Dorsolateral prefrontal cortex (tissue), 120 donors: ENCODE measurements at regions of chr7 and their contacts with region 1.

Region 1: GRCh38 chr7:33062782-33063443 is 337 bp upstream of the NT5C3A start:
- DNase-seq: peak; percentile 84 to 93 (median 92)
- H3K4me3 ChIP-seq: peak overlapping the region; percentile 65 to 98 (median 91)
- H3K27ac ChIP-seq: peak overlapping the region; percentile 86 to 99 (median 96)
- H3K27me3 ChIP-seq: no peaks in the 10 kb centered on the region
- CTCF ChIP-seq: peak in 21 of 56 donors; percentile 1 to 49 (median 15)

Region 2: GRCh38 chr7:32495298-32496176 is 567.4 kb before region 1 on chr7 and contains the start of gene AVL9:
- intact Hi-C with region 1: loop called (anchors 5 to 10 kb)
- DNase-seq: peak; percentile 93 to 100 (median 98)
- H3K4me3 ChIP-seq: peak within 1 kb of the TSS; percentile 69 to 99 (median 94)
- H3K27ac ChIP-seq: peak within 1 kb of the TSS; percentile 68 to 99 (median 95)
- H3K27me3 ChIP-seq: no peaks in the 10 kb centered on the region
- CTCF ChIP-seq: peak in 8 of 56 donors; percentile 4 to 30 (median 20)
- total RNA-seq, gene AVL9: 38.2 to 86.2 (median 63.0) TPM

Region 3: GRCh38 chr7:32779167-32779566 is 283.7 kb before region 1 on chr7:
- intact Hi-C with region 1: loop called in 1 of 2 experiments (anchors 10 kb)
- DNase-seq: no peak
- H3K4me3 ChIP-seq: no peak overlapping the region
- H3K27ac ChIP-seq: peak overlapping the region in 5 of 59 donors; percentile 23 to 73 (median 69)
- H3K27me3 ChIP-seq: no peaks in the 10 kb centered on the region
- CTCF ChIP-seq: no peak

Region 4: DNA sequence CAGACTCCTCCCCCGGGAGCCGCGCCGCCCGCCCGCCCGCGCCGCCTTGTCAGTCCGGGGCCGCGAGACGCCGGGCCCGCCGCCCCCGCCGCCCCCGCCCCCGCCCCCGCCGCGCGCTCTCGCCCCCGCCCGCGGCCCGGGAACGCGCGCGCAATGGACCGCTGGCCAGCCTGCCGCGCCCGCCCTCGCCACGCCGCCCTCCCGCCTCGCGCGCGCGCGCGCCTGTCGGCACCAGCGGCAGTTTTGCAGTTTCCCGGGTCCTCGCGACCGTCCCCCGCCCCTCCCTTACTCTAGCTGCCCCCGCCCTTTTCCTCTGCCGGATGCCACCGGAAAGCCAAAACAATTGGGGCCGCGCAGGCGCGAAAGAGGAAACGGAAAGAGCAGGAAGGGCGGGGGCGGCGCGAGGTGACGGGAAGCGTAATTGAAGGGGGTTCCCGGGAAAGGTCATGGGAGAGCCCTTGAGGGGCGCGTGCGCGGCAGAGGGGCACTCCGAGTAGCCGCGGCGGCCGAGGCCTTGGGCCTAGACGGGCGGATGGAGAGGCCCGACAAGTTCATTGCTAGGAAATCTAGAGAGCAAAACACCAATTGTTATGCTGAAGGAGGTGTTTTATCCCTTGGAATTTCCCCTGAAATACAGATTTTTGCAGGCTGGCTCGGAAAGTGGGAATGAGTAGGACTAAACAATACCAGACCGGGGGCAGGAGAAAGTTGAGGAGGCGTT is 171.0 kb before region 1 on chr7:
- intact Hi-C with region 1: loop called (anchors 2 kb)
- DNase-seq: peak; percentile 89 to 97 (median 94)
- H3K4me3 ChIP-seq: peak overlapping the region; percentile 51 to 98 (median 77)
- H3K27ac ChIP-seq: peak overlapping the region; percentile 80 to 100 (median 97)
- H3K27me3 ChIP-seq: no peaks in the 10 kb centered on the region
- CTCF ChIP-seq: peak in 9 of 56 donors; percentile 4 to 20 (median 7)

Region 5: DNA sequence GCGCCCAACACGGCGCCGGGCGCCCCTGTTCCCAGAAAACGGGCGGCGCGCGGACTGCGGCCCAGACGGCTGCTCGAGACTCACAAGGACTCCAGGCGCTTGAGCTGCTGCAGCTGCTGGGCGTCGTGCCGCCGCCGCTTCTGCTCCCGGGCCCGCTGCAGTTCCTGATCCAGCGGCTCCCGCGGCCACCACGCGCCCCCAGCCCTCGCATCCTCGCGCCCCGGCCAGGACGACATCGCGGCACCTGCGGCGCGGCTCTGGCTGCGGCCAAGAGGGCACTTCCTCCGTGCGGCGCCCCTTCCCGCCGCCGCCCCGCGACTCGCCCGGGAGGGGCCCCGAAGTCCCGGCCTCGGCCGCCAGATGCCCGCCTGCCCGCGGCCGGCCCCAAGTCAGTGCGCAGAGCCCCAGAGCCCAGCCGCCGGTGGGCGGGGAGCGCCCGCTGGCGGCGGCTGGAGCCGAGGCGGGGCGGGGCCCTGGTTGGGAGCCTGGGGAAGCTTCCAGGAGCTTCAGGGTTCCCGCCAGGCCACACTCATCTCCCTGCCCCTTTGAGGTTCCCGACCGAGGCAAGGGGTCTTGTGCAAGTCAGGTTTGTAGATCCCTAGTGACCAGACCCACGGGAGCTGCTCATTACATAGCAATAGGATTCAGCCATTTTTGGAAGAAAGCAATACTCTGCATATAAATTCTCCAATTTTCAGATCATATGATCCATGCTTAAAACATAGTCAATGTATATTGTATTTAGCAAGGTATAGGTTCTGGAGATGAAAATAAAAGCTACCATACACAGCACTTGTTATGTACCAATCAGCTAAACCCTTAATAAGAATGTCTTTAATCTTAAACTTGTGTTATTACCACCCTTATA is 119.9 kb before region 1 on chr7:
- intact Hi-C with region 1: loop called in 1 of 2 experiments (anchors 2 kb)
- DNase-seq: peak; percentile 54 to 88 (median 70)
- H3K4me3 ChIP-seq: peak overlapping the region; percentile 58 to 91 (median 81)
- H3K27ac ChIP-seq: peak overlapping the region; percentile 60 to 99 (median 95)
- H3K27me3 ChIP-seq: no peaks in the 10 kb centered on the region
- CTCF ChIP-seq: peak in 54 of 56 donors; percentile 38 to 93 (median 68)

Region 6: DNA sequence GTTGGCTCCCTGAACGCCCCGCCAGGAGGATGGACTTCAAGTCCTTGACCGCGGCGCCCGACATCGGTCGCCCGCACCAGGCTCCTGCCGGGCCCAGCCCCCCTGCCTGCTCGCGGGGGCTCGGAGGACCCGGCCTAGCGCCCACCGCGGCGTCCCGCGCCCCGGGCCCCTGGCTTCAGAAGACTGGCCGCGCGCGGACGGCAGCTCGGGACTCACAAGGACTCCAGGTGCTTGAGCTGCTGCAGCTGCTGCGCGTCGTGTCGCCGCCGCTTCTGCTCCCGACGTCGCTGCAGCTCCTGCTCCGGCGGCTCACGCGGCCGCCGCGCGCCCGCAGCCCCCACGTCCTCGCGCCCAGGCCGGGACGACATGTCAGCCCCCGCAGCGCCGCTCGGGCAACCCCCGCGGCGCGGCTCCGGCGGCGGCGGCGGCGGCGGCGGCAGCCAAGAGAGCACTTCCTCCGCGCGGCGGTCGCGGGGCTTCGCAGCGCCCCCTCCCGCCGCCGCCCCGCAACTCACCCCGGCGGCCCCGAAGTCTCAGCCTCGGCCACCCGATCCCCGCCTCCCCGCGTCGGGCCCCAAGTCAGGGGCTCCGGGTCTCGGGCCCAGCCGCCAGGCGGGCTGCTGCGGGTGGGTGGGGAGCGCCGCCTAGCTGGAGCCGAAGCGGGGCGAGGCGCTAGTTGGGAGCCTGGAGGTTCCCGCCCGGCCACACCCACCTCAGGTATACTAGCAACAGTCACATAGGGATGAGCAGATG is 46.3 kb after region 1 on chr7 and contains the start of gene RP9:
- intact Hi-C with region 1: loop called (anchors 5 kb)
- DNase-seq: peak in 9 of 10 donors; percentile 25 to 82 (median 53)
- H3K4me3 ChIP-seq: peak within 1 kb of the TSS; percentile 67 to 99 (median 90)
- H3K27ac ChIP-seq: peak within 1 kb of the TSS in 56 of 59 donors; percentile 11 to 93 (median 78)
- H3K27me3 ChIP-seq: no peaks in the 10 kb centered on the region
- CTCF ChIP-seq: peak in 54 of 56 donors; percentile 31 to 84 (median 58)
- total RNA-seq, gene RP9: 5.9 to 25.1 (median 11.4) TPM

Region 7: GRCh38 chr7:33128990-33129805 is 66.3 kb after region 1 on chr7 and contains the start of gene BBS9:
- intact Hi-C with region 1: loop called (anchors 1 to 5 kb)
- DNase-seq: peak; percentile 92 to 96 (median 94)
- H3K4me3 ChIP-seq: peak within 1 kb of the TSS; percentile 56 to 96 (median 80)
- H3K27ac ChIP-seq: peak within 1 kb of the TSS; percentile 65 to 97 (median 92)
- H3K27me3 ChIP-seq: no peaks in the 10 kb centered on the region
- CTCF ChIP-seq: peak in 25 of 56 donors; percentile 10 to 46 (median 20)
- total RNA-seq, gene BBS9: 23.0 to 66.1 (median 39.1) TPM

Region 8: GRCh38 chr7:33287748-33288147 is 224.8 kb after region 1 on chr7:
- intact Hi-C with region 1: no loop called
- DNase-seq: no peak
- H3K4me3 ChIP-seq: no peak overlapping the region
- H3K27ac ChIP-seq: no peak overlapping the region
- H3K27me3 ChIP-seq: no peaks in the 10 kb centered on the region
- CTCF ChIP-seq: no peak